CD4-positive, alpha-beta T cell (primary cell): ENCODE measurements at regions of chr2 and their contacts with region 1.

Region 1: DNA sequence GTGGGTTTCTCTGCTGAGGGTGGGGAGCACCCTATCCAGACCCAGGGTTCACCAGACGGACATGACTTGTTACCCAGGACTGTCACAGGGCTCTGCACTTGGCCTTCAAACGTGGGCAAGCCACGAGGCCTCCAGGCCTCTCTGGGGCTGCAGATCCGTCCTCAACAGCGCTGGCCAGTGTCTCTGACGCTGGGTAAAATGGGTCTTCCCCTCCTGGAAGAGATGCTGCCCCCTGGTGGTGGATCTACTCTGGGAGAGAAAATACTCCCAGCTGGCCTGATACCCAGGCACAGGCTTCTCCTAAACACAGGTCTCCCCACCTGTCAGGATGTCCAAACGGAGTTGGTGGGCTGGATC is 3.7 kb downstream of the GPR17 start:
- DNase-seq: peak; percentile 74 to 97 (median 85)
- ATAC-seq: peak; percentile 81
- H3K4me3 ChIP-seq: no peak overlapping the region
- H3K4me3 Mint-ChIP-seq: peak overlapping the region; percentile 56
- H3K27ac ChIP-seq: no peak overlapping the region
- H3K27ac Mint-ChIP-seq: peak overlapping the region; percentile 81
- H3K4me1 ChIP-seq: peaks cover 20% of the 10 kb centered on the region
- H3K4me1 Mint-ChIP-seq: peaks cover 35% of the 10 kb centered on the region
- H3K27me3 ChIP-seq: no peaks in the 10 kb centered on the region
- H3K27me3 Mint-ChIP-seq: no peaks in the 10 kb centered on the region
- CTCF ChIP-seq: peak; percentile 88

Region 2: GRCh38 chr2:127086990-127087790 is 562.5 kb before region 1 on chr2:
- CTCF ChIA-PET with region 1: no interaction called
- POLR2A ChIA-PET with region 1: no interaction called
- intact Hi-C with region 1: loop called in 1 of 2 experiments (anchors 10 kb)
- DNase-seq: peak in 1 of 14 experiments; percentile 34
- ATAC-seq: no peak
- H3K4me3 ChIP-seq: no peak overlapping the region
- H3K4me3 Mint-ChIP-seq: no peak overlapping the region
- H3K27ac ChIP-seq: no peak overlapping the region
- H3K27ac Mint-ChIP-seq: peak overlapping the region; percentile 99
- H3K4me1 ChIP-seq: peaks cover 46% of the 10 kb centered on the region
- H3K4me1 Mint-ChIP-seq: peaks cover 38% of the 10 kb centered on the region
- H3K27me3 ChIP-seq: no peaks in the 10 kb centered on the region
- H3K27me3 Mint-ChIP-seq: no peaks in the 10 kb centered on the region
- CTCF ChIP-seq: no peak

Region 3: GRCh38 chr2:127197475-127198385 is 451.9 kb before region 1 on chr2:
- CTCF ChIA-PET with region 1: no interaction called
- POLR2A ChIA-PET with region 1: no interaction called
- intact Hi-C with region 1: loop called in 1 of 2 experiments (anchors 5 kb)
- DNase-seq: peak; percentile 12 to 65 (median 38)
- ATAC-seq: peak; percentile 81
- H3K4me3 ChIP-seq: peak overlapping the region; percentile 17
- H3K4me3 Mint-ChIP-seq: peak overlapping the region; percentile 81
- H3K27ac ChIP-seq: no peak overlapping the region
- H3K27ac Mint-ChIP-seq: no peak overlapping the region
- H3K4me1 ChIP-seq: no peaks in the 10 kb centered on the region
- H3K4me1 Mint-ChIP-seq: no peaks in the 10 kb centered on the region
- H3K27me3 ChIP-seq: no peaks in the 10 kb centered on the region
- H3K27me3 Mint-ChIP-seq: no peaks in the 10 kb centered on the region
- CTCF ChIP-seq: no peak

Region 4: DNA sequence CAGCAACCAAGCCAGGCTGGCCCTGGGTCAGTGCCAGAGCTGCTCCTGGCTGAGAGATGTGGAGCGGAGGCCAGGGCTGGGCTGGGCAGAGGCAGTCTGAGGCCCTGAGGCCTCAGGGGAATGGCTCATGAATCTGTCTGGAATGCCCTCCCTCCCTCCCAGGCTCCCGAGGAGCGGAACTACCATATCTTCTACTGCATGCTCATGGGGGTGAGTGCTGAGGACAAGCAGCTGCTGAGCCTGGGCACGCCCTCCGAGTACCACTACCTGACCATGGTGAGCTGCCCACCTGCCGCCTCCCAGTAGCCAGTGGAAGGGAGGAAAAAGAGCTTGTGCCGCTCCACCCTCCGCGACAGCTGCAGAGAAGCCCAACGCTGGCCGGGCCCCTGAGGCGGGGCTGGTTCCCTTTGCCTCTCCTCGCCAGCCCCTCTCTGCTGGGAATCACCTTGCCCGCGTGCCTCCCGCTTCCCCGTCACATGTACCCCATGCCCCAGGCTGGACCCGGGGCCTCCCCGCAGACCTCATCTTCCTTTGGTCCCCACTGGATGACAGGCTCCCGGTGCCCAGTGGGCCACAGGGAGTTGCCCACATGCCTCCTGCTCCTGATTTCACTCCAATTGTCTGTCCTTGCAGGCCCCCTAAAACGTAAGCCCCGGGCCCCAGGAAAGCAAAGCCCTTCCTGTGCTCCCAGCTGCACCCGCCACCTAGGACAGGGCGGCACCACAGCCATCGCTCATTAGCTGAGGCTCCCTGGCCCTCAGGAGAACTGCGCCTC is 73.0 kb before region 1 on chr2:
- CTCF ChIA-PET with region 1: no interaction called
- POLR2A ChIA-PET with region 1: no interaction called
- intact Hi-C with region 1: loop called in 1 of 2 experiments (anchors 5 kb)
- DNase-seq: no peak
- ATAC-seq: no peak
- H3K4me3 ChIP-seq: no peak overlapping the region
- H3K4me3 Mint-ChIP-seq: no peak overlapping the region
- H3K27ac ChIP-seq: no peak overlapping the region
- H3K27ac Mint-ChIP-seq: no peak overlapping the region
- H3K4me1 ChIP-seq: peaks cover 2% of the 10 kb centered on the region
- H3K4me1 Mint-ChIP-seq: peaks cover 15% of the 10 kb centered on the region
- H3K27me3 ChIP-seq: no peaks in the 10 kb centered on the region
- H3K27me3 Mint-ChIP-seq: no peaks in the 10 kb centered on the region
- CTCF ChIP-seq: no peak

Region 5: GRCh38 chr2:127591221-127591923 is 58.3 kb before region 1 on chr2:
- CTCF ChIA-PET with region 1: interaction called, 78 read pairs
- POLR2A ChIA-PET with region 1: interaction called, 20 read pairs
- intact Hi-C with region 1: loop called (anchors 1 kb)
- DNase-seq: peak; percentile 45 to 83 (median 61)
- ATAC-seq: peak; percentile 99
- H3K4me3 ChIP-seq: no peak overlapping the region
- H3K4me3 Mint-ChIP-seq: no peak overlapping the region
- H3K27ac ChIP-seq: no peak overlapping the region
- H3K27ac Mint-ChIP-seq: no peak overlapping the region
- H3K4me1 ChIP-seq: peaks cover 5% of the 10 kb centered on the region
- H3K4me1 Mint-ChIP-seq: peaks cover 16% of the 10 kb centered on the region
- H3K27me3 ChIP-seq: no peaks in the 10 kb centered on the region
- H3K27me3 Mint-ChIP-seq: no peaks in the 10 kb centered on the region
- CTCF ChIP-seq: peak; percentile 80

Region 6: GRCh38 chr2:127770973-127771735 is 121.5 kb after region 1 on chr2:
- CTCF ChIA-PET with region 1: no interaction called
- POLR2A ChIA-PET with region 1: no interaction called
- intact Hi-C with region 1: no loop called
- DNase-seq: no peak
- ATAC-seq: no peak
- H3K4me3 ChIP-seq: no peak overlapping the region
- H3K4me3 Mint-ChIP-seq: no peak overlapping the region
- H3K27ac ChIP-seq: no peak overlapping the region
- H3K27ac Mint-ChIP-seq: peak overlapping the region; percentile 30
- H3K4me1 ChIP-seq: peaks cover 8% of the 10 kb centered on the region
- H3K4me1 Mint-ChIP-seq: peaks cover 31% of the 10 kb centered on the region
- H3K27me3 ChIP-seq: no peaks in the 10 kb centered on the region
- H3K27me3 Mint-ChIP-seq: no peaks in the 10 kb centered on the region
- CTCF ChIP-seq: no peak

Region 7: DNA sequence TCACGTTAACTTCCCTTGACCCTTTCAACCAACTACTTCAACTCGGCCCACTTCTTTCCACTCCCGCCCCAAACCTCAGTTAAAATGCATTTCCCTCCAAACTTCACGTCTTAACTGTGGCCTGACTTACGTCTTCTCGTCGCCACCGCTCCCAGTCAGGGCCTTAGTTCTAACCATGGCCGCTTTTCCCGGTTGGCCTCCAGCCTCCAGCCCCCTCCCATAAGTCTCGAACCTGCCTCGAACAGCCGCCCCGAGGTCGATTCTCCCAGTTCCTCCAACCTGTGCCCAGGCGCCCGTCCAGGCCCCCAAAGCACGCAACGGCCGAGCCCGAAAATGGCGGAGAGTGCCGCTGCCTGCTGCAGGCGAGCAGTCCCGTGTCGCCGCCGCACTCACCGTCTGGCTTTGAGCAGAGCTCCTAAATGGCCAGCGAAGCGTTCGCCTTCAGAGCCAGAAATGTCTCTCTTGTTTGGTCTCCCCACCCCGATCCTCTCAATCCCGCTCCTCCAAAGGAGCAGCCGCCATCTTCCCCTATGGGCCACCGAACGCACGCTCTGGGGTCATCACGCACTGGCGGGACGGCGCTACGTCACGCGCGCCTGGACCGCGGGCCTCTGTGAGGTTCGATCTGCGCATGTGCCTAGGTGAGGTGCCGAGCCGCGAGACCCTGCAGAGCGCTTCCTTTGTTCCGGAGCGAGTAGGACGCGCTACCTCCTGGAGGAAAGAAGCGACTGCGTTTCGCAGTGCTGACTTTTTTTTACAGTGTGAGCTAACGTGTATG is 161.1 kb after region 1 on chr2 and contains the start of gene WDR33:
- CTCF ChIA-PET with region 1: no interaction called
- POLR2A ChIA-PET with region 1: no interaction called
- intact Hi-C with region 1: loop called in 1 of 2 experiments (anchors 5 kb)
- DNase-seq: peak; percentile 89 to 98 (median 93)
- ATAC-seq: peak; percentile 96
- H3K4me3 ChIP-seq: peak within 1 kb of the TSS; percentile 83
- H3K4me3 Mint-ChIP-seq: peak within 1 kb of the TSS; percentile 97
- H3K27ac ChIP-seq: peak within 1 kb of the TSS; percentile 95 to 97
- H3K27ac Mint-ChIP-seq: peak within 1 kb of the TSS; percentile 99
- H3K4me1 ChIP-seq: peaks cover 36% of the 10 kb centered on the region
- H3K4me1 Mint-ChIP-seq: peaks cover 54% of the 10 kb centered on the region
- H3K27me3 ChIP-seq: no peaks in the 10 kb centered on the region
- H3K27me3 Mint-ChIP-seq: no peaks in the 10 kb centered on the region
- CTCF ChIP-seq: no peak
- total RNA-seq, gene WDR33: 59.8 to 61.5 TPM

Region 8: DNA sequence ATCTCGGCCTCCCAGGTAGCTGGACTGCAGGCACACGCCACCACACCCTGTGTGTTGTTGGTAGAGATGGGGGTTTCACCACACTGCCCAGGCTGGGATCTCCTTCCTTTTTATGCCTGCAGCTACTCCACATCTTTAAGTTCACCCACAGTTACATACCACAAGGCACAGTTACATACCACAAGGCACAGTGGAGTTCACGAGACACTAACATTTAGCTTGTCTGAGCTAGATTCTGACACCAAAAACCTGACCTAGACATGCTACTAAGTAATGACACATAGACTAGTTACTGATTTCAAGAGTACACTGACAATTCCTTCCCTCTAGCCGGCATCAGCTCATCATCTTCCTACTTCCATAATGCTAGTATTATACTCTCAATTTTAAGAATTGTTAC is 204.0 kb after region 1 on chr2:
- CTCF ChIA-PET with region 1: no interaction called
- POLR2A ChIA-PET with region 1: no interaction called
- intact Hi-C with region 1: no loop called
- DNase-seq: no peak
- ATAC-seq: no peak
- H3K4me3 ChIP-seq: no peak overlapping the region
- H3K4me3 Mint-ChIP-seq: no peak overlapping the region
- H3K27ac ChIP-seq: no peak overlapping the region
- H3K27ac Mint-ChIP-seq: peak overlapping the region; percentile 2
- H3K4me1 ChIP-seq: peaks cover 29% of the 10 kb centered on the region
- H3K4me1 Mint-ChIP-seq: peaks cover 43% of the 10 kb centered on the region
- H3K27me3 ChIP-seq: no peaks in the 10 kb centered on the region
- H3K27me3 Mint-ChIP-seq: no peaks in the 10 kb centered on the region
- CTCF ChIP-seq: no peak